ENCODE measurements at regions of chr10 and their contacts with region 1.

Region 1: DNA sequence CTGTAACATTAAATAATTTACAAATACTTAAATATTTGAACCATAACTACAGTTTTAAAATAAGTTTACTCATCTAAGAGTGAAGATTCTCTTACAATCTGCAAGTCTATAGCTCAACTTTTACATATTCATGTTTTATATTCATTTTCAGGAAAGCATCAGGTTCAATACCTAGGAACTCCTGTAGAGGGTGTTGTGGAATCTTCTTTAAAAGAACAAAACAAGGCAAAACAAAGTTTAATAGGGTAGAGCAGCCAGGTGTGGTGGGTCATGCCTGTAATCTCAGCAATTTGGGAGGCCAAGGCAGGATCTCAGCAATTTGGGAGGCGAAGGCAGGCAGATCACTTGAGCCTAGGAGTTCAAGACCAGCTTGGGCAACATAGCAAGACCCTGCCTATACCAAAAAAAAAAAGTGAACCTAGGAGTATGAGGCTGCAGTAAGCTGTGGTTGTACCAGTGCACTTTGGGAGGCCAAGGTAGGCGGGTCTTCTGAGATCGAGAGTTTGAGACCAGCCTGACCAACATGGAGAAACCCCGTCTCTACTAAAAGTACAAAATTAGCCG is 45.1 kb downstream of the ST8SIA6 start:
- DNase-seq: no peak
- H3K4me3 ChIP-seq: no peak overlapping the region
- CTCF ChIP-seq: peak; percentile 21

Region 2: DNA sequence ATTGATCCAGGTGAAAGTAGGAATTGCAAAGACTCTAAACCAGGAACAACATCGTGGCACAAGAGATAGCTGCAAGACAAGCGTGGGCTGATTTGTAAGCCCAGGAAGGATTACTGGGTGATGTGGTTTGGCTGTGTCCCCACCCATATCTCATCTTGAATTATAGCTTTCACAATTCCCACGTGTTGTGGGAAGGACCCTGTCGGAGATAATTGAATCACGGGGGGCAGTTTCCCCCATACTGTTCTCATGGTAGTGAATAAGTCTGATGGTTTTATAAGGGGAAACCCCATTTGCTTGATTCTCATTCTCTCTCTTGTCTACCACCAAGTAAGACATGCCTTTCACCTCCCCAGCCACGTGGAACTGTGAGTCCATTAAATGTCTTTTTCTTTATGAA is 14.4 kb before region 1 on chr10:
- CTCF ChIA-PET with region 1: interaction called, 24 read pairs
- POLR2A ChIA-PET with region 1: no interaction called
- DNase-seq: no peak
- H3K4me3 ChIP-seq: no peak overlapping the region
- CTCF ChIP-seq: no peak

Region 3: GRCh38 chr10:17453373-17454091 is 44.3 kb after region 1 on chr10:
- CTCF ChIA-PET with region 1: no interaction called
- POLR2A ChIA-PET with region 1: no interaction called
- DNase-seq: no peak
- H3K4me3 ChIP-seq: peak overlapping the region; percentile 54
- CTCF ChIP-seq: no peak

Measured in AG04449 (cell line).